Esophagus muscularis mucosa (tissue), 4 donors: ENCODE measurements at regions of chr17 and their contacts with region 1.

Region 1: GRCh38 chr17:21457051-21458026 is 81.2 kb downstream of the KCNJ12 start:
- DNase-seq: peak; percentile 97
- H3K4me3 ChIP-seq: no peak overlapping the region
- H3K27ac ChIP-seq: peak overlapping the region in 3 of 4 donors; percentile 45 to 54 (median 46)
- H3K4me1 ChIP-seq: peaks cover 13 to 24% (median 20%) of the 10 kb centered on the region in 4 donors
- H3K27me3 ChIP-seq: peaks cover 0 to 17% (median 0%) of the 10 kb centered on the region in 4 donors
- CTCF ChIP-seq: peak; percentile 92 to 100 (median 96)
- EP300 ChIP-seq: no peak
- POLR2A ChIP-seq: no peak

Region 2: DNA sequence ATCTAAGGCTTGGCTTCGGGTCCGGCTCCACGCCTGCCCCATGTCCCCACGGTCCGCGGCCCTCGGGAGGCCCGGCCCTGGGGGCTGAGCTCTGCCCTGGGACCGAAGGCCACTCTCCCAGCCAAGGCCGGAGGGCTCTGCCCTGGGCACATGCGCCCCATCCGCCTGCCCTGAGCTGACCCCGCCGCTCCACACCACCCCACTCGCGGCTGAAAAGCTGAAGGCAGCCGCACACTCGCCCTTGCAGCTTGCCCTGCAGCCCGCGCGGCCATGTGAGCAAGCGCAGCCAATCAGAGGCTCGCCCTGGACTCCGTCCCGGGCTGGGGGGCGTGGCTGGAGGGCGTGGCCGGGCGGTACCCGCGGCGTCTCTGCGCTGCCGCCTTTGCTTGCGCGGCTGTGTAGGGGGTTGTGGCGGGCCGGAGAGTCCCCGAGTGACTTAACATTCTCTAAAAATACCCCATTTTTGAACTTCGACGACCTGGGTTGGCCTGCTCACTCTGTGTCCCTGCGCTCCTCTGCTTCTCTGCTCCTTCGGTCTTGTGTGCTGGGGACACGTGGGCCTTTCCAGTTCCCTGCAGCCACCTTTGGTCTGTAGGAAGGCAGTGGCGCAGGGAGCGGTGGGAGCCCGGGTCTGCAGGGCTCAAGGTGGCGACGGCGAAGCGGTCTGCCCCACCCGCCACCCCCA is 181.6 kb before region 1 on chr17:
- intact Hi-C with region 1: loop called (anchors 5 kb)
- DNase-seq: peak; percentile 96
- H3K4me3 ChIP-seq: peak overlapping the region; percentile 65 to 77 (median 73)
- H3K27ac ChIP-seq: peak overlapping the region; percentile 62 to 76 (median 68)
- H3K4me1 ChIP-seq: peaks cover 11 to 45% (median 36%) of the 10 kb centered on the region in 4 donors
- H3K27me3 ChIP-seq: no peaks in the 10 kb centered on the region
- CTCF ChIP-seq: peak in 1 of 3 experiments; percentile 12
- EP300 ChIP-seq: no peak
- POLR2A ChIP-seq: no peak

Region 3: DNA sequence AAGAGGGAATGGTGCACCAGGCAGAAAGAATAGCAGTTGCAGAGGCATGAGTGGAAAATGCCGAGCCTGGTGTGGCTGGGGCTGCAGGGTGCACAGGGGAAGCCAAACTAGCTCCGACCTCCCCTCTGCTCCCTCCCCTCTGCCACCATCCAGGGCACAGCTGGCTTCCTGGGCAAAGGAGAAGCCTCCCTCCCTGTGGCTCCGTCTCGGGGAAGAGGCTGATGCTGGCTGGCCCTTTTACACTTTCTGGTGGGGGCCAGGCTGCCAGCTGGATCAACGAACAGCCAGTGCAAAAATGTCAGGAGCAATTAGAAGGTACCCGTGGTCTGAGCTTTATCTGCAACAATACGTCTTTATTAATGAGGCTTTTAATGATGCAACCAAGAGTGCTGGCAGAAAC is 118.3 kb before region 1 on chr17:
- intact Hi-C with region 1: loop called (anchors 10 kb)
- DNase-seq: no peak
- H3K4me3 ChIP-seq: no peak overlapping the region
- H3K27ac ChIP-seq: no peak overlapping the region
- H3K4me1 ChIP-seq: peaks cover 0 to 3% (median 0%) of the 10 kb centered on the region in 4 donors
- H3K27me3 ChIP-seq: no peaks in the 10 kb centered on the region
- CTCF ChIP-seq: no peak
- EP300 ChIP-seq: no peak
- POLR2A ChIP-seq: no peak